ENCODE measurements at regions of chr9 and their contacts with region 1.

Region 1: GRCh38 chr9:92790542-92791527 is 26.2 kb upstream of the BICD2 start:
- DNase-seq: peak; percentile 69 to 75 (median 72)
- H3K4me3 ChIP-seq: no peak overlapping the region
- H3K4me3 Mint-ChIP-seq: peak overlapping the region in 2 of 8 donors; percentile 35 to 40
- H3K27ac ChIP-seq: no peak overlapping the region
- H3K27ac Mint-ChIP-seq: peak overlapping the region in 4 of 7 donors; percentile 1 to 77 (median 48)
- H3K4me1 ChIP-seq: no peaks in the 10 kb centered on the region
- H3K4me1 Mint-ChIP-seq: peaks cover 3 to 9% (median 5%) of the 10 kb centered on the region in 4 donors
- H3K27me3 ChIP-seq: no peaks in the 10 kb centered on the region
- H3K27me3 Mint-ChIP-seq: peaks cover 4 to 5% of the 10 kb centered on the region in 2 donors

Region 2: GRCh38 chr9:92115071-92115858 is 675.6 kb before region 1 on chr9 and contains the start of gene SPTLC1:
- CTCF ChIA-PET with region 1: no interaction called
- POLR2A ChIA-PET with region 1: no interaction called
- intact Hi-C with region 1: loop called (anchors 5 kb)
- DNase-seq: peak; percentile 90 to 95 (median 94)
- H3K4me3 ChIP-seq: peak within 1 kb of the TSS; percentile 66 to 90
- H3K4me3 Mint-ChIP-seq: peak within 1 kb of the TSS; percentile 97 to 99 (median 99)
- H3K27ac ChIP-seq: peak within 1 kb of the TSS; percentile 89
- H3K27ac Mint-ChIP-seq: peak within 1 kb of the TSS; percentile 96 to 100 (median 99)
- H3K4me1 ChIP-seq: peaks cover 26% of the 10 kb centered on the region
- H3K4me1 Mint-ChIP-seq: peaks cover 26 to 48% (median 34%) of the 10 kb centered on the region in 4 donors
- H3K27me3 ChIP-seq: no peaks in the 10 kb centered on the region
- H3K27me3 Mint-ChIP-seq: no peaks in the 10 kb centered on the region
- total RNA-seq, gene SPTLC1: 56.8 to 57.9 TPM

Region 3: GRCh38 chr9:92293452-92294296 is 497.2 kb before region 1 on chr9 and contains the start of gene IARS1:
- CTCF ChIA-PET with region 1: no interaction called
- POLR2A ChIA-PET with region 1: no interaction called
- intact Hi-C with region 1: loop called (anchors 1 kb)
- DNase-seq: peak; percentile 98 to 100 (median 99)
- H3K4me3 ChIP-seq: peak within 1 kb of the TSS; percentile 66 to 77
- H3K4me3 Mint-ChIP-seq: peak within 1 kb of the TSS; percentile 97 to 100 (median 98)
- H3K27ac ChIP-seq: peak within 1 kb of the TSS; percentile 66
- H3K27ac Mint-ChIP-seq: peak within 1 kb of the TSS; percentile 98 to 99 (median 99)
- H3K4me1 ChIP-seq: peaks cover 49% of the 10 kb centered on the region
- H3K4me1 Mint-ChIP-seq: peaks cover 33 to 84% (median 61%) of the 10 kb centered on the region in 4 donors
- H3K27me3 ChIP-seq: no peaks in the 10 kb centered on the region
- H3K27me3 Mint-ChIP-seq: no peaks in the 10 kb centered on the region
- total RNA-seq, gene IARS1: 109 to 112 TPM

Region 4: GRCh38 chr9:92501671-92502393 is 289.0 kb before region 1 on chr9:
- CTCF ChIA-PET with region 1: no interaction called
- POLR2A ChIA-PET with region 1: no interaction called
- intact Hi-C with region 1: loop called (anchors 5 kb)
- DNase-seq: no peak
- H3K4me3 ChIP-seq: no peak overlapping the region
- H3K4me3 Mint-ChIP-seq: no peak overlapping the region
- H3K27ac ChIP-seq: no peak overlapping the region
- H3K27ac Mint-ChIP-seq: no peak overlapping the region
- H3K4me1 ChIP-seq: no peaks in the 10 kb centered on the region
- H3K4me1 Mint-ChIP-seq: peaks cover 0 to 4% (median 0%) of the 10 kb centered on the region in 4 donors
- H3K27me3 ChIP-seq: no peaks in the 10 kb centered on the region
- H3K27me3 Mint-ChIP-seq: no peaks in the 10 kb centered on the region

Region 5: GRCh38 chr9:92564504-92564903 is 226.3 kb before region 1 on chr9:
- CTCF ChIA-PET with region 1: no interaction called
- POLR2A ChIA-PET with region 1: no interaction called
- intact Hi-C with region 1: no loop called
- DNase-seq: no peak
- H3K4me3 ChIP-seq: no peak overlapping the region
- H3K4me3 Mint-ChIP-seq: no peak overlapping the region
- H3K27ac ChIP-seq: no peak overlapping the region
- H3K27ac Mint-ChIP-seq: no peak overlapping the region
- H3K4me1 ChIP-seq: no peaks in the 10 kb centered on the region
- H3K4me1 Mint-ChIP-seq: no peaks in the 10 kb centered on the region
- H3K27me3 ChIP-seq: no peaks in the 10 kb centered on the region
- H3K27me3 Mint-ChIP-seq: no peaks in the 10 kb centered on the region

Region 6: DNA sequence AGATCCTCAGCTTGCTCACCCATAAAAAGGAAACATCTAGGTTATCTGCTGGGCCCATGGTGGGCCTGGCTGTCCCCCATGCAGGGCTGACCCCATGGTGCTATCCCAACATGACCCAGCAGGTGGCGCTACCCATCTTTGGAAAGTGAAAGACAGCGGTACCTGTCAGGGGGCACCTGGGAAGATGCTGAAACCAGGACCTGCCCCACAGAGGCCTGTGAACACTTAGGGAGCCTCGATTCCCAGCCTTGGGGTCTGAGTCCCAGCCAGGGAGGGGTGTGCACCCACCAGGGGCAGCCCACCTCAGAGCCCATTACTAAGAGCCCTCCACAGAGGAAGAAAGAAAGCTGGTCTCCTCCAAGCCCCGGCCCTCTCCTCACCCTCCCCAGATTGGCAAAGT is 74.3 kb before region 1 on chr9:
- CTCF ChIA-PET with region 1: interaction called, 157 read pairs
- POLR2A ChIA-PET with region 1: interaction called, 9 read pairs
- intact Hi-C with region 1: no loop called
- DNase-seq: peak; percentile 60 to 76 (median 72)
- H3K4me3 ChIP-seq: no peak overlapping the region
- H3K4me3 Mint-ChIP-seq: no peak overlapping the region
- H3K27ac ChIP-seq: no peak overlapping the region
- H3K27ac Mint-ChIP-seq: peak overlapping the region; percentile 15 to 74 (median 48)
- H3K4me1 ChIP-seq: peaks cover 19% of the 10 kb centered on the region
- H3K4me1 Mint-ChIP-seq: peaks cover 15 to 29% (median 17%) of the 10 kb centered on the region in 4 donors
- H3K27me3 ChIP-seq: no peaks in the 10 kb centered on the region
- H3K27me3 Mint-ChIP-seq: no peaks in the 10 kb centered on the region